OCI-LY7 (cell line): ENCODE measurements at regions of chr14 and their contacts with region 1.

Region 1: DNA sequence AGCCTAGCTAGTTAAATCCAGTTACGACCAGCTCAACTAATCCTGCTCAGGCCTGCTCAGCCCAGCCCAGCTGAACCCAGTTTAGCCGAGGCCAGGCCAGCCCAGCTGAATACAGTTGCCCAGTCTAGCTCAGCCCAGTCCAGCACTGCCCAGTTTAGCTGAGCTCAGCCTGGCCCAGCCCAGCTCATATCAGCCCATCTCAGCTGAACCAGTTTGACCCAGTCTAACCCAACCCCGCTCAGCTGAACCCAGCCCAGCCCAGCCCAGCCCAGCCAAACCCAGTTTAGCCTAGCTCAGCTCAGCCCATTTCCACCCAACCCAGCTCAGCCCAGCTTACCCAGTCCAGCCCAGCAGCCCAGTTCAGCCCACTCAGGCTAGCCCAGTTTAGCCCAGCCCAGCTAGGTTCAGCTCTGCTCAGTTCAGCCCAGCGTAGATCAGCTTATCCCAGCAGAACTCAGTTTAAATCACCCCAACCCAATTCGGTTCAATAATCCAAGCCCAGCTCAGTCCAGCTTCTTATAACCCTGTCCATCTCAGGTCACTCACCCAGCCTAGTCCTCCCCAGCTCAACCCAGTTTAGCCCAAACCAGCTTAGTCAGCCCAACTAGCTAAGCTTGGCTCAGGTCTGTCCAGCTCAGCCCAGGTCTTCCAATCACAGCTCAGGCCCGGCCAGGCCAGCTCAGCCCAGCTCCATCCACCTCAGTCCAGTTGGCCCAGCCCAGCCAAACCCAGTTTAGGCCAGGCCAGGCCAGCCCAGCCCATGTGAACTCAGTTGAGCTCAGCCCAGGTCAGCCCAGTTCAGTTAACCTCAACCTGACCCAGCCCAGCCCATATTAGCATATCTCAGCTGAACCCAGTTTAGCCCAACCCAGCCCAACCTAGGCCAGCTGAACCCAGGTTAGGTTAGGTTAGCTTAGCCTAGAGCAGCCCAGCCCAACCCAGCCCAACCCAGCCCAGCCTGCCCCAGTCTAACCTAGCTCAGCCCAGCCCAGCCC is 76.7 kb downstream of the TMEM121 start:
- DNase-seq: no peak
- H3K4me3 ChIP-seq: no peak overlapping the region
- H3K27ac ChIP-seq: no peak overlapping the region
- H3K4me1 ChIP-seq: no peaks in the 10 kb centered on the region
- CTCF ChIP-seq: no peak

Region 2: DNA sequence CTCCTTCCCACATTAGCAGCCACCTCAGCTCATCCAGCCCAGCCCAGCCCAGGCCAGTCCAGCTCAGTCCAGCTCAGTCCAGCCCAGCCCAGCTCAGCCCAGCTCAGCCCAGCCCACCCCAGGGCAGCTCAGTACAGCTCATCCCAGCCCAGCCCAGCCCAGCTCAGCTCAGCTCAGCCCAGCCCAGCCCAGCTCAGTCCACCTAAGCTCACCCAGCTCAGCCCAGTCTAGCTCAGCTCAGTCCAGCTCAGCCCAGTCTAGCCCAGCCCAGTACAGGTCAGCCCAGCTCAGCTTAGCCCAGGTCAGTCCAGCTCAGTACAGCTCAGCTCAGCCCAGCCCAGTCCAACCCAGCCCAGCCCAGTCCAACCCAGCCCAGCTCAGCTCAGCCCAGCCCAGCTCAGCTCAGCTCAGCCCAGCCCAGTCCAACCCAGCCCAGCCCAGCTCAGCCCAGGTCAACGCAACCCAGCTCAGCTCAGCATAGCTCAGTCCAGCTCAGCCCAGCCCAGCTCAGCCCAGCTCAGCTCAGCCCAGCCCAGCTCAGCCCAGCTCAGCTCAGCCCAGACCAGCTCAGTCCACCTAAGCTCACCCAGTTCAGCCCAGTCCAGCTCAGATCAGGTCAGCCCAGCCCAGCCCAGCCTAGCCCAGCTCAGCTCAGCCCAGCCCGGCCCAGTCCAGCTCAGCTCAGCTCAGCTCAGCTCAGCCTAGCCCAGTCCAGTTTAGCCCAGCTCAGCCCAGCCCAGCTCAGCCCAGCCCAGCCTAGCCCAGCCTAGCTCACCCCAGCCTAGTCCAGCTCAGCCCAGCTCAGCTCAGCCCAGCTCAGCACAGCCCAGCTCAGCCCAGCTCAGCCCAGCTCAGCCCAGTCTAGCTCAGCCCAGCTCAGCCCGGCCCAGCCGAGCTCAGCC is 13.7 kb before region 1 on chr14:
- CTCF ChIA-PET with region 1: interaction called, 19 read pairs
- POLR2A ChIA-PET with region 1: no interaction called
- intact Hi-C with region 1: no loop called
- DNase-seq: no peak
- H3K4me3 ChIP-seq: no peak overlapping the region
- H3K27ac ChIP-seq: no peak overlapping the region
- H3K4me1 ChIP-seq: peaks cover 16% of the 10 kb centered on the region
- CTCF ChIP-seq: no peak